Dendritic cell treated with granulocyte-macrophage colony-stimulating factor and Interleukin-4, amounts not matched to agents 40 ng/mL and 50 ng/mL, for 4 days (primary cell): ENCODE measurements at regions of chr5 and their contacts with region 1.

Region 1: GRCh38 chr5:150122158-150122510 is 33.5 kb downstream of the PDGFRB start:
- H3K4me3 Mint-ChIP-seq: no peak overlapping the region
- H3K27ac Mint-ChIP-seq: peak overlapping the region; percentile 60
- H3K4me1 Mint-ChIP-seq: peaks cover 62% of the 10 kb centered on the region
- H3K27me3 Mint-ChIP-seq: no peaks in the 10 kb centered on the region

Region 2: GRCh38 chr5:149902177-149902576 is 220.0 kb before region 1 on chr5:
- intact Hi-C with region 1: no loop called
- H3K4me3 Mint-ChIP-seq: no peak overlapping the region
- H3K27ac Mint-ChIP-seq: no peak overlapping the region
- H3K4me1 Mint-ChIP-seq: peaks cover 13% of the 10 kb centered on the region
- H3K27me3 Mint-ChIP-seq: no peaks in the 10 kb centered on the region

Region 3: GRCh38 chr5:150000256-150000989 is 121.7 kb before region 1 on chr5 and contains the starts of genes HMGXB3 and TIGD6:
- intact Hi-C with region 1: loop called (anchors 5 kb)
- H3K4me3 Mint-ChIP-seq: peak within 1 kb of the TSS; percentile 93
- H3K27ac Mint-ChIP-seq: peak within 1 kb of the TSS; percentile 96
- H3K4me1 Mint-ChIP-seq: peaks cover 68% of the 10 kb centered on the region
- H3K27me3 Mint-ChIP-seq: no peaks in the 10 kb centered on the region

Region 4: GRCh38 chr5:150052956-150053712 is 69.0 kb before region 1 on chr5:
- intact Hi-C with region 1: loop called (anchors 5 kb)
- H3K4me3 Mint-ChIP-seq: peak overlapping the region; percentile 32
- H3K27ac Mint-ChIP-seq: peak overlapping the region; percentile 98
- H3K4me1 Mint-ChIP-seq: peaks cover 90% of the 10 kb centered on the region
- H3K27me3 Mint-ChIP-seq: no peaks in the 10 kb centered on the region

Region 5: GRCh38 chr5:150081541-150082283 is 40.4 kb before region 1 on chr5:
- intact Hi-C with region 1: loop called (anchors 5 kb)
- H3K4me3 Mint-ChIP-seq: peak overlapping the region; percentile 98
- H3K27ac Mint-ChIP-seq: no peak overlapping the region
- H3K4me1 Mint-ChIP-seq: peaks cover 15% of the 10 kb centered on the region
- H3K27me3 Mint-ChIP-seq: no peaks in the 10 kb centered on the region